Activated CD4-positive, alpha-beta T cell treated with anti-CD3 and anti-CD28 coated beads, Interleukin-2, amount 10 ng/mL, durations not matched to agents 24 days and 14 days (primary cell): ENCODE measurements at regions of chr6 and their contacts with region 1.

Region 1: GRCh38 chr6:146857180-146857979 is 258.6 kb downstream of the ADGB start:
- DNase-seq: peak; percentile 92
- H3K4me3 Mint-ChIP-seq: peak overlapping the region; percentile 36
- H3K27ac Mint-ChIP-seq: peak overlapping the region; percentile 52
- H3K4me1 Mint-ChIP-seq: peaks cover 12% of the 10 kb centered on the region
- H3K27me3 Mint-ChIP-seq: no peaks in the 10 kb centered on the region

Region 2: DNA sequence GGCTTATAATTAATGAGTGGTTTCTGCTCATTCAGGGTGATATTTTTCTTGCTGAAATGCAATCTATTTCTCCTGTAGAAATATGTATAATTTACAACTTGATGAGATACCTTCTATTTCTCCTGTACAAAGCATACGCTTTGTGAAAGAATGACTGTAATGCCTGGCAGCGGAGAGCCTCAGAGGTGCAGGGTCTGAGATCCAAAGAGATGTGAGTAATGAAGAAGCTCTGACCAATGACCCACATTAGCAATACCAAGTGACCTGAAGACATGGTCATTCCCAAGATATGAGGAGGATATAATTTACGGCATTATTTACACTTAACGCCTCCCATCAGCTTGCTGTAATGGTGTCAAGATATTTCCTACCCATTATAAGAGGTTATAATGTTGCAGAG is 412.1 kb before region 1 on chr6:
- intact Hi-C with region 1: no loop called
- DNase-seq: no peak
- H3K4me3 Mint-ChIP-seq: no peak overlapping the region
- H3K27ac Mint-ChIP-seq: no peak overlapping the region
- H3K4me1 Mint-ChIP-seq: no peaks in the 10 kb centered on the region
- H3K27me3 Mint-ChIP-seq: no peaks in the 10 kb centered on the region

Region 3: DNA sequence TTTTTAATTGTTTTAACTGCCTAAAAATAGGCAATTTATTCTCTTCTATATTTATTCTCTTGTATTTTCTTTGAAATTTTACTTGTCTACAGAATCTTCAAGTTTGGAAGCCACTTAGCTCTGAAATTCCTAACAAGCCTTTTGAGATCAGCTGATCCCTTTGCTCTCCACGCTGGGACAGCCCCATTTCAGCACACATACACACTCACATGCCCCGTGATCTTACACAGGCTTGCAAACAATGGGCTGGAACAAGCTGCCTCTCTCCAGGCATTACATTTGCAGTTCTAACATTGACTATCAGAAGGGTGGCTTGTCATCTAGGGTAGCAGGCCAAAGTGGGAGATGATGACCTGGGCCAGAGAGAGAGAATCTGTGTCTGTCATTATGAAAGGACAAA is 375.9 kb before region 1 on chr6:
- intact Hi-C with region 1: no loop called
- DNase-seq: no peak
- H3K4me3 Mint-ChIP-seq: no peak overlapping the region
- H3K27ac Mint-ChIP-seq: no peak overlapping the region
- H3K4me1 Mint-ChIP-seq: no peaks in the 10 kb centered on the region
- H3K27me3 Mint-ChIP-seq: no peaks in the 10 kb centered on the region

Region 4: DNA sequence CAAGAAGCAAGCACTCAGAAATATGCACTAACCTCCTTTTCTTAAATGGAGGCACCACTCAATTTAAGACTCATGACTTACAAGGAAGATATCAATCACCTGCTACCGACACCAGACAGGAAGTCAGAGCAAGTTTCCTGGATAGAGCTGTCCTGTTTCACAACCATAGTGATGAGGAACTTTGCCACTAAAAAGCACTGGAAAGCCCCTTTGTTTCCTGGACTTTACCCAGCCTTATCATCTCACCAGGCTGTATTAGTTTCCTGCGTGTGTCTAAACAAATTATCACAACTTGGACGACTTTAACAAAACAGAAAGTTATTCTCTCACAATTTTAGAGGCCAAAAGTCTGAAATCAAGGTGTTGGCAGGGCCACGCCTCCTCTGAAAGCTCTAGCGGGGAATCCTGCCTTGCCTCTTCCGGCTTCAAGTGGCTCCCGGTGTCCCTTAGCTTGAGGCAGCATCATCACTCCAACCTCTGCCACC is 93.0 kb after region 1 on chr6:
- intact Hi-C with region 1: loop called (anchors 5 kb)
- DNase-seq: peak; percentile 65
- H3K4me3 Mint-ChIP-seq: no peak overlapping the region
- H3K27ac Mint-ChIP-seq: peak overlapping the region; percentile 50
- H3K4me1 Mint-ChIP-seq: peaks cover 9% of the 10 kb centered on the region
- H3K27me3 Mint-ChIP-seq: no peaks in the 10 kb centered on the region

Region 5: DNA sequence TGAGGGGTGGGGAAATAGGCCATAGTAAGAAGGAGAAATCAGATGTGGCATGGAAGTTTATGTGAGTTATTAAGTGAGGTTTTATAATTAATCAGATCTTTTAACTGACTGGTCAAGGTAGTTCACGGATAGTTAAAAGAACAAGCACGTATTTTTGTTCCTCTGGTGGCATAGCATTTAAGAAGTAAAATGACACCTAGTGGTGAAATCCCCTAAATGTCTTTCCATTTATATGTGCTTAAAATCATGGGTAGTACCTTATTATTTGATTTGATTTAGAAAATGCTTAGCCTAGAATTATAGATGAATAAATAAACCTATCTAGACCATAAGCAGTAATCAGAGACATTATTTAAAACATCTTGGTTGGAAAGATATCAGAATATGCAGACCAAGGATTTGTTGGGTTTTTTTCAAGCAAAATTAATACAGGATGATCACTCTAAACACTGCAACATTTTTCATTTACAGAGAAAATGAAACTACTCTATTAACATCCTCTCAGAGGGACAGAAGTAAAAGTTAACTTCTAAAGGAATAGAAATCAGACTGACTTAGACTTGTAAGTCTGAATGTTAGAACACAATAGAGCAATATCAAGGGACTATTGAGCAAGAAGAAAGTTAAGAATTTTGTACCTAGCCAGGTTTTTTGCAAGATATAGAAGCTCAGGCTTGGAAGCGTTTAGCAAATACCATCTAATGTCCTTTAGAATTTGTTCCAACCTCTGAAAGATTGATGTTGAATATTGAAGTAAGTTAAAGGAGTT is 427.9 kb after region 1 on chr6:
- intact Hi-C with region 1: loop called (anchors 1 kb)
- DNase-seq: no peak
- H3K4me3 Mint-ChIP-seq: no peak overlapping the region
- H3K27ac Mint-ChIP-seq: peak overlapping the region; percentile 60
- H3K4me1 Mint-ChIP-seq: peaks cover 39% of the 10 kb centered on the region
- H3K27me3 Mint-ChIP-seq: no peaks in the 10 kb centered on the region

Region 6: DNA sequence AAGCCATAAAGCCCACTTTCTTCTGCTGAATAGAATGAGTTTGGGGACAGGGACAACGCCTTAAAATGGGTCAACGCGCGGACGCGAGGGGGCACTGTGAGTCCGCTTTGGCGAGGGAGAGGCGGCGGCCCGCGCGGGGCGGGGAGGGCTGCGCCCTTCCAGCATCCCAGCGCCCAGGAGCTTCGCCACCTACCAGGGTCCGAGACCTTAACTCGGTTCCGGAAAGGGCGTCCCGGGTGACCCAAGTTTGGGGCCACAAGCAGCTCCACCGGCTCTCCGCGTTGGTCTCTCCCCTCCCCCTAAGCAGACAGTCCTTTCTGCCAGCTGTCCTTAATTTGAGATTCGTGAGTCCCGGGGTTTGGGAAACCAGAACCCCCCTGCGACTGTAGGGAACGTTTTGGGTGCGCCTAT is 649.3 kb after region 1 on chr6:
- intact Hi-C with region 1: loop called (anchors 5 kb)
- DNase-seq: peak; percentile 79
- H3K4me3 Mint-ChIP-seq: peak overlapping the region; percentile 76
- H3K27ac Mint-ChIP-seq: no peak overlapping the region
- H3K4me1 Mint-ChIP-seq: peaks cover 11% of the 10 kb centered on the region
- H3K27me3 Mint-ChIP-seq: peaks cover 49% of the 10 kb centered on the region